Activated CD4-positive, alpha-beta T cell treated with anti-CD3 and anti-CD28 coated beads, Interleukin-2, amount 10 ng/mL, durations not matched to agents 24 days and 14 days (primary cell): ENCODE measurements at regions of chr1 and their contacts with region 1.

Region 1: DNA sequence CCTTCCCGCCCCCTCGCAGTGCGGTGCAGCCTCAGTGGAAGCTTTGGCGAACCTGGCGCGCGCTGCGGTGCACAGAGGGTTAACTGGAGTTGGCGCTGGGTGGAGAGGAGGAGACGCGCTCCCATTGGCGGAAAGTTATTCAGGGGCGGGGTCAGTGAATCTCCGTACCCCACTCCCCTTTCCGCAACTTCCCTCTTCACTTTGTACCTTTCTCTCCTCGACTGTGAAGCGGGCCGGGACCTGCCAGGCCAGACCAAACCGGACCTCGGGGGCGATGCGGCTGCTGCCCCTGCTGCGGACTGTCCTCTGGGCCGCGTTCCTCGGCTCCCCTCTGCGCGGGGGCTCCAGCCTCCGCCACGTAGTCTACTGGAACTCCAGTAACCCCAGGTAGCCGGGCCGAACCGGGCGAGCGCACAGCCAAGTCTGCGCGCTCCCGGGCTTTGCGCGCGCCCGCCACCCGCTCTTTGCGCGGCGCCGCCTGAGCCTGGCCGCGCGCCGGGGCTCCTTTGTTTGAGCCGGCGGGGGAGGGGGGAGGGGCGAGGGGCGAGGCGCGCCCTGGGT is at the start of gene EFNA4:
- DNase-seq: peak; percentile 96
- H3K4me3 Mint-ChIP-seq: peak within 1 kb of the TSS; percentile 80
- H3K27ac Mint-ChIP-seq: peak within 1 kb of the TSS; percentile 54
- H3K4me1 Mint-ChIP-seq: peaks cover 23% of the 10 kb centered on the region
- H3K27me3 Mint-ChIP-seq: no peaks in the 10 kb centered on the region
- total RNA-seq, gene EFNA4: 5.8 and 6.2 TPM in 2 replicates

Region 2: DNA sequence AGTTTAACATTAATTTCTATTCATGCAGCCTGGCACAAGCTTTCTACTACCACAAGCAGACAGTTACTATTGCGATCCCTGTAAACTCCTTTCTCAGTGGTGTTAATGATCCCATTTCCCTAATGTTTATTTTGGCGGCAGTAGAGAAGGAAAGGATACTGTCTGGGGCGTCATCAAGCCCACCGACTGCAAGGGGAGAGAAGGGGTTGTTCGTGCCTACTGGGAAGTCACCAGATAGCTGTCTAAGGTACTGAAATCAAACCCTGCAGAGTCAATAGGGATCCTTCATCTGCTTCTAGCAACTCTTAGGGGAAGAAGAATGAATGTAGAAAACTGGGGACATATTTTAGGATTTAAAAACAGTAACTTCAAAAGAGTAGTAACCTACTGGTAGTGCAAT is 360.5 kb before region 1 on chr1:
- intact Hi-C with region 1: no loop called
- DNase-seq: no peak
- H3K4me3 Mint-ChIP-seq: no peak overlapping the region
- H3K27ac Mint-ChIP-seq: no peak overlapping the region
- H3K4me1 Mint-ChIP-seq: peaks cover 7% of the 10 kb centered on the region
- H3K27me3 Mint-ChIP-seq: peaks cover 16% of the 10 kb centered on the region

Region 3: DNA sequence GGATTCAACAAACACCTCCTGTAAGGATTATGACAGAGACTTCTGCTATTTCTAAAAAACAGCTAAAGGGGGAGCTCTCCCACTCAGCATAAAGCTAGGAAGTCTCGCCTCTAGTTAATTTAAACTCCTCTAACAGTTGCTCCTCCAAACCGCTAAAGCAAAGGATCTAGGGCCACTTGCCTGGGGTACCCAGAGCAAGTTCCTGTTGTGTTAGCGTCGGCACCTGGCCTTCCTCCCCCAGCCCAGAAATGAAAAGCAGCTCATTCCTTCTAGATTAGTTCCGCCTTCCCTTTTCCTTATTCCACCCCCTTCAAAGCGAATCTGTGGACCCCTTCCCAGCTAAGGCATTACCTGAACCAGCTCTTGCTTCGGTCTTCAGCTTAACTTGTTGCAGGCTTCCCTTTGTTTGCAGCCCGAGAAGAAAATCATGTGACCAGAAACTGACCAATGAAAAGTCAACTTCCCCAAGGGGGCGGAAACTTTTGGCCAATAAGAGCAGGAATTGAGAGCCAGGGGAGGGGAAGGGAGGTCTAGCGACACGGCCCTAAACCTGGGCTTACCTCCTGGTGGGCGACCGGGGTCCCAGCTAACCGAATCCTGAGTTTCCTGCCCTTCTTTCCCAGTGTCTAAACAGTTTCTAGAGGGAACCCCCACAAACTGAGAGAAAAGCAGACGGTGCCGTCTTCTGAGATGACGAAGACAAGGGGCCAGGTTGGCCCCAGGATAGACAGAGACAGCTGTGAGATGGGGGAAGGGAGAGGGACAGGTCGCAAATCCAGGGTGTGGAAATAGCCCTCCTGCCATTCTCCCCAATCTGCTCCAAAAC is 107.7 kb before region 1 on chr1 and contains the start of gene PBXIP1:
- intact Hi-C with region 1: loop called (anchors 1 kb)
- DNase-seq: peak; percentile 97
- H3K4me3 Mint-ChIP-seq: peak within 1 kb of the TSS; percentile 87
- H3K27ac Mint-ChIP-seq: peak within 1 kb of the TSS; percentile 96
- H3K4me1 Mint-ChIP-seq: peaks cover 63% of the 10 kb centered on the region
- H3K27me3 Mint-ChIP-seq: no peaks in the 10 kb centered on the region
- total RNA-seq, gene PBXIP1: 19.3 and 21.6 TPM in 2 replicates

Region 4: DNA sequence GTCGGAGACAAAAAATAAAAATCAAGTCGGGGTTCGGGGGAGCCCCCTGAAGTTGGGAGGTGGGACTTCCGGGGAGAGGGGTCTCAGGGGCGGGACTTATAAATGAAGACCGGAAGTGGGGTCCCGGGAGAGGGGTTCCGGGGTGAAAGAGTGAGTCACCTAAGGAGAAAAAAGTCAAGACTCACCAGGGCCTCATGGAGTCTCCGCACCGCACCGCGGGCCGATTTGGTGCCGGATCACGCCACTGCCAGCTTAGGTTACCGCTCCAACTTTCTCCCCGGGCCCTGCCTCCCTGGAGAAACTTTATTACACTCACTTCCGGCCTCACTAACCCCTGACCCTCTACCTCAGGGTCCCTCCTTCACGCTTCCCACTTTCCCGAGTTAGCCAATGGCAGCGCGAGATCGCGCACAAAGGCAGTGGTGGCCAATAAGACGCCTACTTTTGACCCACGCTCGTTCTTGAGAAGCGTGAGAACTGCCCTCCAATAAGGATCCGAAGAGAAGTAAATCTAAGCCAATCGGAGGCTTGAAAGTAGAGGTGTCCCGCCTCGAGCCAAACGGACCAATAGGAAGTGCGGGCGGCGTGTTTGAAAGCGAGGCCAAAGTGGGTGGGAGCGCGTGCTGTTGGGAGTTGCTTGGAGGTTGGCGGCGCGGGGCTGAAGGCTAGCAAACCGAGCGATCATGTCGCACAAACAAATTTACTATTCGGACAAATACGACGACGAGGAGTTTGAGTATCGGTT is 89.4 kb before region 1 on chr1 and contains the start of gene CKS1B:
- intact Hi-C with region 1: loop called (anchors 5 kb)
- DNase-seq: peak; percentile 98
- H3K4me3 Mint-ChIP-seq: no peak within 1 kb of the TSS
- H3K27ac Mint-ChIP-seq: no peak within 1 kb of the TSS
- H3K4me1 Mint-ChIP-seq: peaks cover 39% of the 10 kb centered on the region
- H3K27me3 Mint-ChIP-seq: no peaks in the 10 kb centered on the region
- total RNA-seq, gene CKS1B: 179 and 181 TPM in 2 replicates

Region 5: GRCh38 chr1:155017041-155017945 is 46.3 kb before region 1 on chr1:
- intact Hi-C with region 1: loop called (anchors 2 kb)
- DNase-seq: peak; percentile 96
- H3K4me3 Mint-ChIP-seq: peak overlapping the region; percentile 78
- H3K27ac Mint-ChIP-seq: peak overlapping the region; percentile 37
- H3K4me1 Mint-ChIP-seq: peaks cover 52% of the 10 kb centered on the region
- H3K27me3 Mint-ChIP-seq: no peaks in the 10 kb centered on the region

Region 6: GRCh38 chr1:155044812-155045690 is 18.6 kb before region 1 on chr1:
- intact Hi-C with region 1: loop called (anchors 1 kb)
- DNase-seq: peak; percentile 90
- H3K4me3 Mint-ChIP-seq: no peak overlapping the region
- H3K27ac Mint-ChIP-seq: no peak overlapping the region
- H3K4me1 Mint-ChIP-seq: peaks cover 22% of the 10 kb centered on the region
- H3K27me3 Mint-ChIP-seq: peaks cover 6% of the 10 kb centered on the region

Region 7: DNA sequence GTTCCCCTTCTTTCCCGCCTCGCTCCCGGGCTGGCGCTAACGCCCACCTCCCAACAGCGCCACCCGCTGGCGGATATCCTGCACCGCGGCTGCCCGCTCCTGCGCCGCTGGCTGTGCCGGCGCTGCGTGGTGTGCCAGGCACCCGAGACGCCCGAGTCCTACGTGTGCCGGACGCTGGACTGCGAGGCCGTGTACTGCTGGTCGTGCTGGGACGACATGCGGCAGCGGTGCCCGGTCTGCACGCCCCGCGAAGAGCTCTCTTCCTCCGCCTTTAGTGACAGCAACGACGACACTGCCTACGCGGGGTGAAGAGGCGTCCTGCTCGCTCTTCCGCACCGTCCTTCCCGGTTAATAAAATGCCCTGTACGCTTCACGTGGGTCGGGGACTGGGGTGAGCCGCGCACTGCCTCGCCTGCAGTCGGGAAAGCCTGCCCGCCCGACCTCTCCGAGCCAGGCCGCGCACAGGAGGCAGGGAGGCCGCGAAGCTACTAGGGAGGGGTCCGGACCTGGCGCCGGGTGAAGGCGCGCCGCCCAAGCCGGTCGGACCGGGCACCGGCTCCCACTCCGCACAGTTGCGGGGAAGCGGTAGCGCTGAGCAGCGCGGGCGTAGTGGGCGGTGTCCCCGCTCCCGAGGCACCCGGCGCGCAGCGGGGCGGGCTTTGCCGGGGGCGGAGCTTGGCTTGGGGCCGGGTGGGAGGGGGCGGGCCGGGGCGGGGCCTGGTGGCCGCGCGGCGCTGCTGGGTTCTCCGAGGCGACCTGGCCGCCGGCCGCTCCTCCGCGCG is 12.9 kb before region 1 on chr1 and contains the start of gene ADAM15:
- intact Hi-C with region 1: loop called (anchors 1 kb)
- DNase-seq: peak; percentile 96
- H3K4me3 Mint-ChIP-seq: peak within 1 kb of the TSS; percentile 88
- H3K27ac Mint-ChIP-seq: peak within 1 kb of the TSS; percentile 89
- H3K4me1 Mint-ChIP-seq: peaks cover 22% of the 10 kb centered on the region
- H3K27me3 Mint-ChIP-seq: no peaks in the 10 kb centered on the region
- total RNA-seq, gene ADAM15: 79.7 and 84.5 TPM in 2 replicates

Region 8: GRCh38 chr1:155195201-155196102 is 131.8 kb after region 1 on chr1:
- intact Hi-C with region 1: no loop called
- DNase-seq: no peak
- H3K4me3 Mint-ChIP-seq: peak overlapping the region; percentile 89
- H3K27ac Mint-ChIP-seq: peak overlapping the region; percentile 90
- H3K4me1 Mint-ChIP-seq: peaks cover 34% of the 10 kb centered on the region
- H3K27me3 Mint-ChIP-seq: no peaks in the 10 kb centered on the region